ENCODE measurements at regions of chr2 and their contacts with region 1.

Region 1: DNA sequence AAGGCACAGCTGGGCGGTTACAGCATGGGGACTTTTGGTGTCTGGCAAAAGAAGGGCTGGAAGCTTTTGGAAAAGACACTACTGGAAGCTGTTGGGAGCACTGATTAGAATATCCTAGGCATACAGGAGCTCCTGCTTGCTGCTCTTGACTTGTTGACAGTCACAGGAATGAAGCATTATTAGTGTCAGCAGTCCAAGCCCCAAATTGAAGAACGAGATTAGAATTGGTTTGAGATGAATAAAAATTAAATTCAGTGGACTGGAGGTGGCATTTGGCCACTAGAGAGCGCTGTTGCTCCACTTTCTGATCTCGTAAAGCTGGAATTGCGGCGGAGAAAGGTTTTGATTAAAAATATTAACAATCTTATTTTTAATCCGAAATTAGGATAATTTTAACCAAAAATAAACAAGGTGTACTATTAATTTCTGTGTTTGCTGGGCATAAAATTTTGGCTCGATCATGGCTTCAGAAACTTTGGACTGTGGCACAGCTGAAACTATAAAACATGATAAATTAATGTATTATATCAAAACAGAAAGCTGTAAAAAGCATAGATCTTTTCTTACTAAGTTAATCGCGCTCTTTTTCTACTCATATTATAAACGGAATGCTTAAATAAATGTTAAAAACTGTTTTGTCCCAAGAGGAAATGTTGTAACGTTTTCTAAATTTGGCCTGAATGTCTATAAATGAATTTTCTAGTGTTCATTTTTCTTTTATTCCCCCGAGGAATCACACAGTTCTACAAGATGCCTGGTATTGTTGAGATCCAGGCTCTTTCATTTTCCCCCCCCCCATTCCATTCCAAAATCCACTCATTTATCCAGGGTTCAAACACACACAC is 2.4 kb upstream of the HOXD8 start:
- DNase-seq: no peak
- H3K4me3 ChIP-seq: no peak overlapping the region
- H3K27me3 ChIP-seq: peaks cover 25% of the 10 kb centered on the region
- CTCF ChIP-seq: peak; percentile 69

Region 2: DNA sequence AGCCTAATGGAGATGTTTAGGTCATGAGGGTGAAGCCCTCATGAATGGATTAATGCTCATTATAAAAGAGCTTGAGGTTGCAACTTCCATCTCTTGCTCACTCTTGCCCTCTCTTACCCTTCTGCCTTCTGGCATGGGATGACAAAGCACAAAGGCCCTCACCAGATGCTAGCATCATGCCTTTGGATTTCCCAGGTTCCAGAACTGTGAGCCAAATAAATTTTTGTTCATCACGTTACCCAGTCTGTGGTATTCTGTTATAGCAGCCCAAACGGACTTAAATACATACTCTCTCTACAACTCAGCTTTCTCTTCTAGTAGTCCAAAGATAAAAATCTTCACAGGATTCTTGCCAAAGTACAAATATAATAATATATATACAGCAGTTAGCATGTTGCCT is 200.9 kb before region 1 on chr2:
- CTCF ChIA-PET with region 1: no interaction called
- POLR2A ChIA-PET with region 1: no interaction called
- DNase-seq: peak; percentile 27
- H3K4me3 ChIP-seq: no peak overlapping the region
- H3K27me3 ChIP-seq: no peaks in the 10 kb centered on the region
- CTCF ChIP-seq: no peak

Region 3: DNA sequence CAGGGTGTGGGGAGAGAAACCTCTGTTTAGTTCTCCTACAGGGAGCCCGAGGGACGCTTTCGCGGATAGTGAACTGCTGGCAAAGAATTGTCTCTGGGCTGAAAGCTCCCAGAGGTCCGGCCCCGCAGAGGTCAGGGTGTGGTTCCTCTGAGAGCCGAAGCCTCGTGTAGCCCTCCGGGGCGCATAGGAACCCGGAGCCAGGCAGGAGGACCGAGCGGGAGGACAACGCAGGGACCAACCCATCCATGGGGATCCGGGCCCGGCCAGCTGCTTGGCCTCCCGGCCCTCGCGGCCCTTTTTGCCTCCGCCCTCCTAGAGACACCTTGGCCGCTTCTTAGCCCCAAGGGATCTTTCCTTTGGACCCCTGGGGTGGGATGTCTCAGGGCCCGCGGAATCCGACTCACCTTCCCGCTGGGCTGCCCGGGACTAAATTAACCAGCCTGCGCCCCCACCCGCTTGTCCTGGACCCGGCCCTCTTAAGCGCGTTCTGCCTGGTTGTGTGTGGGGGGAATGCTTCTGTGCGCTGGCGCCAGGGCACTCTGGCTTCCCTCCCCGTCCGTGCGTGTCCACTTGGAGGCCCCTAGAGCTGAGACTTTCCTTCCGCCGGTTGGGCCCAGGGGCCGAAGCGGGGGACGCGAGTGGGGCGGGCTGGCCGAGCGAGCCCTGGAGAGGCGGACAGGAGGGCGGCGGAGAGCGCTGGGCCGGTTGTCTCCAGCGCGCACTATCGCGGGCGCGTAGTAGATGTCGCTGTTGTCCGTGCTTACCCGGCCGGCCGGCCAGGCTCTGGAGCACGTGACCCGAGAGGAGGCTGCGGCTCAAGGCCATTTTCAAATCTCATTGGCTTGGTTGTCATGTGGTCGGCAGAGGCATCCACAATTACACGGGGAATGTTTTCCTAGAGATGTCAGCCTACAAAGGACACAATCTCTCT is 11.0 kb before region 1 on chr2 and contains the start of gene HOXD10:
- CTCF ChIA-PET with region 1: interaction called, 11 read pairs
- POLR2A ChIA-PET with region 1: no interaction called
- DNase-seq: no peak
- H3K4me3 ChIP-seq: no peak within 1 kb of the TSS
- H3K27me3 ChIP-seq: 0 out of 2 replicates have a peak, but pooled peaks cover 1% of the 10 kb centered on the region
- CTCF ChIP-seq: no peak
- polyA plus RNA-seq, gene HOXD10: 11.0 and 12.6 TPM in 2 replicates

Region 4: GRCh38 chr2:176638167-176639015 is 511.2 kb after region 1 on chr2:
- CTCF ChIA-PET with region 1: interaction called, 52 read pairs
- POLR2A ChIA-PET with region 1: no interaction called
- DNase-seq: no peak
- H3K4me3 ChIP-seq: peak overlapping the region; percentile 59
- H3K27me3 ChIP-seq: peaks cover 1% of the 10 kb centered on the region
- CTCF ChIP-seq: peak; percentile 70

Region 5: GRCh38 chr2:176643646-176644045 is 516.5 kb after region 1 on chr2:
- CTCF ChIA-PET with region 1: interaction called, 52 read pairs
- POLR2A ChIA-PET with region 1: no interaction called
- DNase-seq: no peak
- H3K4me3 ChIP-seq: no peak overlapping the region
- H3K27me3 ChIP-seq: peaks cover 1% of the 10 kb centered on the region
- CTCF ChIP-seq: no peak

Region 6: GRCh38 chr2:176653479-176654443 is 526.6 kb after region 1 on chr2:
- CTCF ChIA-PET with region 1: interaction called, 149 read pairs
- POLR2A ChIA-PET with region 1: interaction called, 5 read pairs
- DNase-seq: no peak
- H3K4me3 ChIP-seq: no peak overlapping the region
- H3K27me3 ChIP-seq: no peaks in the 10 kb centered on the region; the same call in 1 of the 2 replicates
- CTCF ChIP-seq: peak; percentile 79

Region 7: GRCh38 chr2:176814306-176815052 is 687.3 kb after region 1 on chr2:
- CTCF ChIA-PET with region 1: interaction called, 16 read pairs
- POLR2A ChIA-PET with region 1: no interaction called
- DNase-seq: peak; percentile 0
- H3K4me3 ChIP-seq: no peak overlapping the region
- H3K27me3 ChIP-seq: peaks cover 2% of the 10 kb centered on the region
- CTCF ChIP-seq: peak; percentile 46

Region 8: DNA sequence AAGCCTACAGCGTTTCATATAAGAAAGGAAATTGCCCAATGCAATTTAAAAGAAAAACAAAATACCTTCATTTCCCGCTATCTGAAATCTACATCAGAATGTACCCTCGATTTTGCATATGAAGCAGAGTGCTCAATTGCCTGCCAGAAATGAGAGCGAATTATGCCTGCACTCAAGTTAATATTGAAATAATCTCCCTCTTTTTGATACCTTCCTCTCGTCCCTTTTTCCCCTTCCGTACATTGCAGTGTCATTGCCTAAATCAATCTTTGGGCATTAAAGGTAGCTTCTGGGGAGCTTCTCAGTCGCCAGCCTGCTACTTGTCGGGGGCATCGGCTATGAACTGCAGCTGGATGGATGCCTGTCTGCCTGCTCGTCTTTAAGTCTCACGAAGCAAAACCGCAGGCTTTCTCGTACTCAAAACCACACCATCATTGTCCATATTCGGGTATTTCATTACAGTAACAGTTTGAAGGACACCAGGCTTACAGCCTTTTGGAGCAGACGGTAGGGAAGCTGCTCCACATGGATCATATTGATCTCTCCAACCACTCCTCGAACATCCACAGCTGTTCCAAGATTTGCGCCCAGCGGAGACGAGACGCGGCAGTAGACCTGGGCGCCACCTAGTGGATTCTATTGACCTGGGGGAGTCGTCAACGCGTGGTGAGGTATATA is 1021.5 kb after region 1 on chr2:
- CTCF ChIA-PET with region 1: interaction called, 17 read pairs
- POLR2A ChIA-PET with region 1: no interaction called
- DNase-seq: no peak
- H3K4me3 ChIP-seq: peak overlapping the region; percentile 35
- H3K27me3 ChIP-seq: peaks cover 17% of the 10 kb centered on the region
- CTCF ChIP-seq: peak; percentile 95